Naive thymus-derived CD4-positive, alpha-beta T cell (primary cell): ENCODE measurements at regions of chr1 and their contacts with region 1.

Region 1: GRCh38 chr1:235295902-235296376 is 32.0 kb downstream of the ARID4B start:
- DNase-seq: no peak
- ATAC-seq: no peak
- H3K4me3 ChIP-seq: no peak overlapping the region
- H3K4me3 Mint-ChIP-seq: peak overlapping the region in 9 of 10 donors; percentile 4 to 81 (median 60)
- H3K27ac ChIP-seq: no peak overlapping the region
- H3K27ac Mint-ChIP-seq: peak overlapping the region; percentile 41 to 92 (median 79)
- H3K4me1 ChIP-seq: peaks cover 38 to 47% of the 10 kb centered on the region in 2 donors
- H3K4me1 Mint-ChIP-seq: peaks cover 33 to 77% (median 65%) of the 10 kb centered on the region in 7 donors
- H3K27me3 ChIP-seq: no peaks in the 10 kb centered on the region
- H3K27me3 Mint-ChIP-seq: no peaks in the 10 kb centered on the region

Region 2: DNA sequence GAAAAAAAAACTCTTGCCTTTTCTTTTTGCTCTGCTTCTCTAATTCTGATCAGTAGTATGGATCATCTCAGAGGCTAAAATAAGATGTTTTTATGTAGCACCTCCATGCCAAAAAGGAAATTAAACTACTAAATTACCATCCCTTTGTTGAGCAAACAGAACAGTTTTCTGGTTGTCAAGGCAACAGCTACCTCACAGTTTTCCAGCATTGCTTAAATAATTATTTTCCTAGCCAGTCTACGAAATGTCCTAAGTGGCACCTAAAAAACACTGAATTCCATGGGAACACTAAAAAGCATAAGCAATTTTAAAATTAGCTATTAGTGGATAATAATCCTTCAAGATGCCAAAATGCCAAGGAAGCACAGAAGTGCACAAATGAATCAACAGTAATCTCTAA is 29.6 kb before region 1 on chr1:
- CTCF ChIA-PET with region 1: no interaction called
- POLR2A ChIA-PET with region 1: no interaction called
- intact Hi-C with region 1: loop called in 1 of 2 experiments (anchors 5 kb)
- DNase-seq: no peak
- ATAC-seq: no peak
- H3K4me3 ChIP-seq: no peak overlapping the region
- H3K4me3 Mint-ChIP-seq: peak overlapping the region in 4 of 10 donors; percentile 22 to 40 (median 26)
- H3K27ac ChIP-seq: peak overlapping the region; percentile 9
- H3K27ac Mint-ChIP-seq: peak overlapping the region in 7 of 9 donors; percentile 22 to 75 (median 35)
- H3K4me1 ChIP-seq: peaks cover 25% of the 10 kb centered on the region in 2 donors
- H3K4me1 Mint-ChIP-seq: peaks cover 30 to 89% (median 80%) of the 10 kb centered on the region in 7 donors
- H3K27me3 ChIP-seq: no peaks in the 10 kb centered on the region
- H3K27me3 Mint-ChIP-seq: no peaks in the 10 kb centered on the region

Region 3: DNA sequence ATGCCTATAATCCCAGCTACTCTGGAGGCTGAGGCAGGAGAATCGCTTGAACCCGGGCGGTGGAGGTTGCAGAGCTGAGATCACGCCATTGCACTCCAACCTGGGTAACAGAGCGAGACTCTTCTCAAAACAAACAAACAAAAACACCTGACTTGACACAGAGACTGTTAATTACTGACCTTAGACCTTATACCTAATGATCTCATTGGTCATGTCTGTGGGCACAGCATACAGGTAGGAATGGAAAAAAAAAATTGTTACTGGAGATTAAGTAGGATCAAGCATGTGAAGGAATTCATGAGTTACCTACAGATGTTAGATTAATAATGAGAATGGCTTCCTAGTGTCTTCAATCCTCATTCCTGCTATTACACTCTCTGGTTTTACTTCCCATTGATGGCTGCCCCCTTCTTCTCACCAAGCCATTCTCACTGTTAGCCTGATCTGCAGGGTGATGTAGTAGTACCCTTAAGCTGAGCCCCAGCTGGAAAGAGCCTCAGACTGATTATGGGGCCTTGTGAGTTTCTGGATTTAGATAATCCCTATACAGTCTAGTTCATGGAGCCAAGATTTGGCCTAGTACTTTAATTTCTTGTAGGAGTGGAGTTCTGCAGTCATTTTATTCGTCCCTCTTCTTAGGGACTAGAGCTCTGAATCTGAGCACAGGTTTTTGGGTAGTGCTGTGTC is 80.1 kb after region 1 on chr1:
- CTCF ChIA-PET with region 1: no interaction called
- POLR2A ChIA-PET with region 1: no interaction called
- intact Hi-C with region 1: no loop called
- DNase-seq: no peak
- ATAC-seq: no peak
- H3K4me3 ChIP-seq: no peak overlapping the region
- H3K4me3 Mint-ChIP-seq: no peak overlapping the region
- H3K27ac ChIP-seq: no peak overlapping the region
- H3K27ac Mint-ChIP-seq: peak overlapping the region in 1 of 9 donors; percentile 25
- H3K4me1 ChIP-seq: no peaks in the 10 kb centered on the region
- H3K4me1 Mint-ChIP-seq: peaks cover 5 to 35% (median 16%) of the 10 kb centered on the region in 7 donors
- H3K27me3 ChIP-seq: no peaks in the 10 kb centered on the region
- H3K27me3 Mint-ChIP-seq: no peaks in the 10 kb centered on the region